ENCODE measurements at regions of chr5 and their contacts with region 1.

Region 1: DNA sequence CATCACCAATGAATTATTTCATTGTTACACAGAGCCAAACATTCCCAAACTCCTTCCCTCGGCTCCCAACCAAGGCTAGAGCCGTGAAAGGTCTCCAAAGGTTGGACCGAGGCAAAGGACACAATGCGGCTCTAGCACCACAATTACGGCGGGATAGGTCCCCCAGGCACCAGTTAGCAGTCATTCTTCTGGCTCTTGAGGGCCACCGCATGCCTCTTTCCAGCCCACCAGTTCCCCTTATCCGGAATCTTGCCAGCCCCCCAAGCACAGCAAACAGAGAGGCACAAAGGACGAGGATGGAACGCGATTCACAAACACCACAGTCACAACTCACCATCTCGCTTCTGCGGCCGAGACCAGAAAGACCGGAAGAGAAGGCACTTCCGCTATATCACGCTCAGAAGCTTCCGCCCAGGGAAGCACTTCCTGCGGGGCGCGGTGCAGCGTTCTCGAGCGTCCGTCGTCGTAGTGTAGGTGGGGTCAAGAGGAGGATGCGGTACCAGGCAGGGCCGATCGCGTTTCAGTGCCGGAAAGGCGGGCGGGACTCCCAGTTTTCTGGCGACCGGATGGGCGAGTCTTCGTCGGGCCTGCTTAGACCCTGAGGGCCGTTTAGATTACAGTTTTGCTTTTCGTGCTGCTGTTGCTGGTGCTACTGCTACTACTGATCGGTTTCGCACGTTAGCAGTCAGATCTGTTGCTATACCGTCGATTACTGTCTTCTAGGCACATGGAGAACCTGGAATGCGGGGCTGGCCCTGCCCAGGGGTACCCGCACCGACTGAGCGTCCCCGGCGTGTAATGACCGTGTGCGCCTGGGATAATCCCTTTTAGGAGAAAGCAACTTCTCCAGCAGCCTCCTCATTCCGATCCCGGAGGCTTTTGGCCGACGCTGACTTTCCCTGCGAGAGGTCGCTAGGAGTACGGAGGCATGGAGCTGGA is at the start of gene RPL37:
- DNase-seq: peak; percentile 88 to 91 (median 90)
- H3K4me3 ChIP-seq: peak within 1 kb of the TSS; percentile 71 to 99
- H3K4me3 Mint-ChIP-seq: peak within 1 kb of the TSS; percentile 97 to 100 (median 98)
- H3K27ac ChIP-seq: peak within 1 kb of the TSS; percentile 92
- H3K27ac Mint-ChIP-seq: peak within 1 kb of the TSS; percentile 94 to 100 (median 99)
- H3K4me1 ChIP-seq: peaks cover 41% of the 10 kb centered on the region
- H3K4me1 Mint-ChIP-seq: peaks cover 20 to 68% (median 47%) of the 10 kb centered on the region in 4 donors
- H3K27me3 ChIP-seq: no peaks in the 10 kb centered on the region
- H3K27me3 Mint-ChIP-seq: no peaks in the 10 kb centered on the region
- total RNA-seq, gene RPL37: 2,354 to 2,406 TPM

Region 2: GRCh38 chr5:40755407-40756365 is 79.4 kb before region 1 on chr5 and contains the start of gene TTC33:
- CTCF ChIA-PET with region 1: interaction called, 3 read pairs
- POLR2A ChIA-PET with region 1: interaction called, 5 read pairs
- intact Hi-C with region 1: loop called (anchors 1 kb)
- DNase-seq: peak; percentile 90 to 97 (median 92)
- H3K4me3 ChIP-seq: peak within 1 kb of the TSS; percentile 93 to 95
- H3K4me3 Mint-ChIP-seq: no peak within 1 kb of the TSS
- H3K27ac ChIP-seq: peak within 1 kb of the TSS; percentile 90
- H3K27ac Mint-ChIP-seq: peak within 1 kb of the TSS in 1 of 7 donors; percentile 68
- H3K4me1 ChIP-seq: peaks cover 21% of the 10 kb centered on the region
- H3K4me1 Mint-ChIP-seq: peaks cover 8 to 29% (median 16%) of the 10 kb centered on the region in 4 donors
- H3K27me3 ChIP-seq: no peaks in the 10 kb centered on the region
- H3K27me3 Mint-ChIP-seq: no peaks in the 10 kb centered on the region
- total RNA-seq, gene TTC33: 15.2 to 16.2 TPM

Region 3: DNA sequence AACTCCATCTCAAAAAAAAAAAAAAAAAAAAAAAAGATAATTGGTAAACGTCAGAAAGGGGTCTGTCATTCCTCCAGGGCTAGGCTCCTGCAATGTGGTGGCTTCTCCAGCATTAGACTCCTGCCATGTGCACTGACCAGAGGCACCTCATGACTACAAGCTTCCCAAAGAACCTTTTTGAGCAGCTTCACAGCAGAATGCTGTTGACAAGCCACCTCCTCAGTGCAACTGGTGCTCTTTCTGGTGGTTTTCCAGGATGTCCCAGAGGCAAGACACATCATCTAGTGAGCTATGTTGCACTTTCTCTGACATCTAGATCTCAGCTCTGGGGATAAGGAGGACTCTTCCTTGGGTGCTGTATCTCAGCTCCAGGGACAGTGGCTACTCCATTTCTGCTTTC is 11.7 kb before region 1 on chr5:
- CTCF ChIA-PET with region 1: interaction called, 8 read pairs
- POLR2A ChIA-PET with region 1: interaction called, 15 read pairs
- intact Hi-C with region 1: no loop called
- DNase-seq: no peak
- H3K4me3 ChIP-seq: no peak overlapping the region
- H3K4me3 Mint-ChIP-seq: no peak overlapping the region
- H3K27ac ChIP-seq: no peak overlapping the region
- H3K27ac Mint-ChIP-seq: peak overlapping the region in 4 of 7 donors; percentile 6 to 53 (median 28)
- H3K4me1 ChIP-seq: no peaks in the 10 kb centered on the region
- H3K4me1 Mint-ChIP-seq: peaks cover 0 to 5% (median 2%) of the 10 kb centered on the region in 4 donors
- H3K27me3 ChIP-seq: no peaks in the 10 kb centered on the region
- H3K27me3 Mint-ChIP-seq: no peaks in the 10 kb centered on the region

Region 4: DNA sequence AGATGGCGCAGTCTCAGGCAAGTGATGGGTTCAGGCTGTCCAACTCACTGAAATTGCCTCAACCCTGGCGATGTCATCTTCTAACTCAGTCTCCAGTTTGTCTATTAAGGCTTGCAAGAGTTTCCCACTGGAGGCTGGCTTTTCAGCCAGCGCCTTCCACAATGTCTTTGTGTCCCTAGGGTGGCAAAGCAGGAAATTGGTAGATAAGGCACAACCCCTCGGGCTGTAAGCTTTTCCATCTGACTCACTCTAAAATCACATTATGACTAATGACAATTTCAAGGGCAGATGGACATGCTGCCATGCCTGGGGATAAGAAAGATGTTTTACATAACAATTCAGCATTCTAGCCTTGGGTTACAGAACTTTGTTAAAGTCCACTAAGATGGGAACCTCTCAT is 174.1 kb after region 1 on chr5:
- CTCF ChIA-PET with region 1: no interaction called
- POLR2A ChIA-PET with region 1: no interaction called
- intact Hi-C with region 1: no loop called
- DNase-seq: no peak
- H3K4me3 ChIP-seq: no peak overlapping the region
- H3K4me3 Mint-ChIP-seq: no peak overlapping the region
- H3K27ac ChIP-seq: no peak overlapping the region
- H3K27ac Mint-ChIP-seq: no peak overlapping the region
- H3K4me1 ChIP-seq: no peaks in the 10 kb centered on the region
- H3K4me1 Mint-ChIP-seq: no peaks in the 10 kb centered on the region
- H3K27me3 ChIP-seq: no peaks in the 10 kb centered on the region
- H3K27me3 Mint-ChIP-seq: no peaks in the 10 kb centered on the region

Measured in CD4-positive, alpha-beta memory T cell (primary cell).